Aorta (tissue), 5 donors: ENCODE measurements at regions of chr2 and their contacts with region 1.

Region 1: DNA sequence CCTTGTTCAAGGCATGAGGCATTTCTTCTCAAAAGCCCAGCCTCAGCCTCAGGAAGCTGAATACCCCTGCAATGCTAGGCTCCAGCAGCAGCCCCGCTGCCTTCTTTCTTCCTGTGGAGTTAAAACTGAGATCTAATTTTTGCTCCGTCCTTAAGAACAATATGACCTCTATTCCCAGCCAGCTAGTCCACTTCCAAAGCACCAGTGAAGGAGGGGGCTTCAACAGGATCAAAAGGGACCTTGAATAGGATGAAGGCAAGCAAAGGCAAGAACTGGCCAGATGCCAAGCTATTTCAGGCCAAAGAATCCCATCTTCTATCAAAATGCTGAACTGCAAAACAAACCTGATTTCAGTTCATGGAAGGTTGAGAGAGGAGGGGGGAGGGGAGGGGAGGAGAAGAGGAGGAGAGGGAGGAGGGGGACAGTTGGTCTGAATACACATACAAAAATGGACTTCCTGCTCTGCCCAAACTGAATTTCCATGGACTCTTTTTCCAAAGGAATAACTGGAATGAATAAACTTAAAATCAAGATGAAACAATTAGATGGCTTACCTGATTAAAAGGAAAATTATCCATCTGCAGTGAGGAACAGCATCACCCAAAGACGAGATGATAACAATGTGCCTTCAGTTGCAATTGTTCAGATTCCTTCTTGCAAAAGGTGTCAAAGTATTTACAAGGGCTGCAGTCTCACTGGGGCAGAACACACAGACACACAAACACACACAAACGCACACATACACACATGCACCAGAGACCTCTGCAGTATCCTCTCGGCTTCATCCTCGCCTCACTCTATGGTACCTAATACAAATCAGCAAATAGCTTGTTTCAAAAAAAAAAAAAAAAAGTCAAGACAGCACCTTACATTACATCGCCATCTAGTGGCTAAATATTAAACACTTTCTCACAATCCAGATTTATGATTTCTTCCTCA is at the start of gene SCN1A:
- DNase-seq: no peak
- ATAC-seq: no peak
- H3K4me3 ChIP-seq: no peak within 1 kb of the TSS
- H3K27ac ChIP-seq: no peak within 1 kb of the TSS
- H3K4me1 ChIP-seq: no peaks in the 10 kb centered on the region
- H3K27me3 ChIP-seq: no peaks in the 10 kb centered on the region
- total RNA-seq, gene SCN1A: not detected

Region 2: DNA sequence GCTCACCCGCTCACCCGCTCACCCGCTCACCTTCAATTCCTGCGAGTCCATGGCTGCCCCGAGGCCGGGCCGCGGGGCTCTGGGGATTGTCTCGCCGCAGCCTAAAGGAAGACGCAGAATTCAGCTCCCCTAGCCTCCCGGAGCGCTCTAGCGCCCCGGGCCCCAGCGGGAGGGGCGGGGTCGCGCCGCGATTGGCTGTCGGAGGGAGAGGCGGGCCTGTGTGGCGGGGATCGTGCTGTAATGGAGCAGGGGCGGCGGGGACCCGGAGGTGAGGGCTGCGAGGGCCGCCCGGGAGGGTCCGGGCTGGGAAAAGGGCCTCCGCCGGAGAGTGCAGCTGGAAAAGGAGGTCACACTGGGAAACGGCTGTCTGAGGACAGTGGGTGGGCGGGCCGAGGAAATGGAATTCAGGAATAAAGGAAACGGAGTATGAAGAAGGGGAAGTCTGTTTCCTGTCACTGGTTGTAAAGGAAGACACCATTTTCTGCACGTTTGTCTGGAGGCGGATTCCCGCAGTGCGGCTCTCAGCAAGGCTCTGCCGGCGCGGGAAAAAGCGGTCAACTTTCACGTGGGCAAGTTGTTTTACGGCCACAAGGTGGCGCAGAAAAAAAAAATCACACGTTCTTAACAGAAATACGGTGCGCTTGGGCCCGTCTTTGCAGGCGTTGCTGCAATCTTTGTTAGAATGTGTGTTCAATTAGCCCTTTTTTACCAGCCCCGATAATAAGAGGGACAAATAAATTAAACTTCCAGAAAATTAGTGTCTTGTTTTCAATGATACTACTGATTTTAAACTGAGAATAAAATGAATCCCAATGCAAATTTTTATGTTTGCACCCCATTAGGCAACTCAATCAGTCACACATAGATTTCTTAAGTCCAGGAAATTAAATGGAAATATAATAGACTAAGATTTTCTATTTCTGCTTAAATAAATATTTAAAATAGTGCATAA is 173.6 kb before region 1 on chr2 and contains the start of gene TTC21B:
- intact Hi-C with region 1: loop called (anchors 2 to 5 kb)
- DNase-seq: peak; percentile 97 to 99
- ATAC-seq: peak; percentile 100
- H3K4me3 ChIP-seq: peak within 1 kb of the TSS; percentile 82 to 91
- H3K27ac ChIP-seq: peak within 1 kb of the TSS in 1 of 2 donors; percentile 69
- H3K4me1 ChIP-seq: peaks cover 2 to 6% of the 10 kb centered on the region in 2 donors
- H3K27me3 ChIP-seq: no peaks in the 10 kb centered on the region
- total RNA-seq, gene TTC21B: 26.3 to 31.8 TPM

Region 3: GRCh38 chr2:166057370-166058164 is 69.9 kb before region 1 on chr2:
- intact Hi-C with region 1: loop called (anchors 2 kb)
- DNase-seq: no peak
- ATAC-seq: no peak
- H3K4me3 ChIP-seq: no peak overlapping the region
- H3K27ac ChIP-seq: no peak overlapping the region
- H3K4me1 ChIP-seq: no peaks in the 10 kb centered on the region
- H3K27me3 ChIP-seq: no peaks in the 10 kb centered on the region